Activated CD8-positive, alpha-beta T cell treated with anti-CD3 and anti-CD28 coated beads for 36 hours (primary cell): ENCODE measurements at regions of chr9 and their contacts with region 1.

Region 1: GRCh38 chr9:130243015-130243734 is 22.4 kb upstream of the HMCN2 start:
- DNase-seq: peak; percentile 92
- ATAC-seq: peak; percentile 65
- H3K4me3 Mint-ChIP-seq: no peak overlapping the region
- H3K27ac Mint-ChIP-seq: no peak overlapping the region
- H3K4me1 Mint-ChIP-seq: peaks cover 26% of the 10 kb centered on the region
- H3K27me3 Mint-ChIP-seq: peaks cover 2% of the 10 kb centered on the region
- CTCF ChIP-seq: peak; percentile 92

Region 2: GRCh38 chr9:130254752-130255630 is 11.8 kb after region 1 on chr9:
- CTCF ChIA-PET with region 1: interaction called, 14 read pairs
- POLR2A ChIA-PET with region 1: interaction called, 6 read pairs
- intact Hi-C with region 1: no loop called
- DNase-seq: no peak
- ATAC-seq: no peak
- H3K4me3 Mint-ChIP-seq: no peak overlapping the region
- H3K27ac Mint-ChIP-seq: no peak overlapping the region
- H3K4me1 Mint-ChIP-seq: no peaks in the 10 kb centered on the region
- H3K27me3 Mint-ChIP-seq: peaks cover 8% of the 10 kb centered on the region
- CTCF ChIP-seq: no peak